WTC11 (cell line): ENCODE measurements at regions of chr7 and their contacts with region 1.

Region 1: GRCh38 chr7:131302876-131303707 is 24.6 kb upstream of the MKLN1 start:
- DNase-seq: peak; percentile 48
- ATAC-seq: peak; percentile 85
- H3K4me3 Mint-ChIP-seq: no peak overlapping the region
- H3K27ac Mint-ChIP-seq: no peak overlapping the region
- H3K4me1 Mint-ChIP-seq: peaks cover 36% of the 10 kb centered on the region
- H3K27me3 Mint-ChIP-seq: peaks cover 8% of the 10 kb centered on the region
- CTCF ChIP-seq: no peak

Region 2: DNA sequence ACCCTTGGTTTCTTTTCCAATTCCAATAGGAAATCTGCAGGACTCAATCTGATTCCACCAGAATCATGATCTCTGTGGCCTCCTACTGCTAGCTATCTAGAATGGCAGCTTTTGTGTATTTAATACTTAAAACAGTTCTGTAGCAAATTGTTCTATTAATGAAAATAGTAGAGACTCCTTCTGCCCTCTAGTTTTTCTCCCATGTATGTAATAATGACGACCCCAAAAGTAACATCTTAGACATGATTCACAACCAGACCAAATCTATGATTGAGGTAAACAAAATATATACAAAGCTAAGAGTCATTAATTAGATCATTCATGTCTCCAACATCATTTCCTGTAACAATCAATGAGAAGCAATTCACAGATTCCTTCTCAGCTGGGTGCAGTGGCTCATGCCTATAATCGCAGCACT is 234.5 kb before region 1 on chr7:
- CTCF ChIA-PET with region 1: interaction called, 17 read pairs
- POLR2A ChIA-PET with region 1: no interaction called
- DNase-seq: no peak
- ATAC-seq: no peak
- H3K4me3 Mint-ChIP-seq: no peak overlapping the region
- H3K27ac Mint-ChIP-seq: no peak overlapping the region
- H3K4me1 Mint-ChIP-seq: peaks cover 36% of the 10 kb centered on the region
- H3K27me3 Mint-ChIP-seq: no peaks in the 10 kb centered on the region
- CTCF ChIP-seq: no peak